Common myeloid progenitor, CD34-positive (primary cell): ENCODE measurements at regions of chr2 and their contacts with region 1.

Region 1: GRCh38 chr2:68925295-68925896 is 27.3 kb downstream of the GKN2 start:
- DNase-seq: peak; percentile 61 to 77 (median 71)
- H3K4me3 ChIP-seq: no peak overlapping the region
- H3K27ac ChIP-seq: no peak overlapping the region
- H3K4me1 ChIP-seq: peaks cover 0 to 4% (median 2%) of the 10 kb centered on the region in 4 experiments
- H3K27me3 ChIP-seq: no peaks in the 10 kb centered on the region

Region 2: GRCh38 chr2:68467077-68467960 is 458.1 kb before region 1 on chr2 and contains the starts of genes APLF and FBXO48:
- CTCF ChIA-PET with region 1: interaction called, 48 read pairs
- POLR2A ChIA-PET with region 1: no interaction called
- DNase-seq: peak; percentile 99 to 100 (median 99)
- H3K4me3 ChIP-seq: peak within 1 kb of the TSS; percentile 79 to 98 (median 96)
- H3K27ac ChIP-seq: peak within 1 kb of the TSS; percentile 91 to 96
- H3K4me1 ChIP-seq: peaks cover 2 to 29% (median 18%) of the 10 kb centered on the region in 4 experiments
- H3K27me3 ChIP-seq: no peaks in the 10 kb centered on the region

Region 3: GRCh38 chr2:68709421-68709911 is 215.9 kb before region 1 on chr2:
- CTCF ChIA-PET with region 1: interaction called, 86 read pairs
- POLR2A ChIA-PET with region 1: no interaction called
- DNase-seq: peak; percentile 53 to 57 (median 57)
- H3K4me3 ChIP-seq: no peak overlapping the region
- H3K27ac ChIP-seq: no peak overlapping the region
- H3K4me1 ChIP-seq: peaks cover 2 to 22% (median 16%) of the 10 kb centered on the region in 4 experiments
- H3K27me3 ChIP-seq: no peaks in the 10 kb centered on the region

Region 4: GRCh38 chr2:68837164-68837860 is 88.1 kb before region 1 on chr2:
- CTCF ChIA-PET with region 1: interaction called, 22 read pairs
- POLR2A ChIA-PET with region 1: no interaction called
- DNase-seq: peak; percentile 86 to 94 (median 94)
- H3K4me3 ChIP-seq: peak overlapping the region in 1 of 7 experiments; percentile 24
- H3K27ac ChIP-seq: no peak overlapping the region
- H3K4me1 ChIP-seq: peaks cover 31 to 56% (median 51%) of the 10 kb centered on the region in 4 experiments
- H3K27me3 ChIP-seq: no peaks in the 10 kb centered on the region

Region 5: GRCh38 chr2:68936427-68936826 is 11.0 kb after region 1 on chr2:
- CTCF ChIA-PET with region 1: interaction called, 18 read pairs
- POLR2A ChIA-PET with region 1: no interaction called
- DNase-seq: no peak
- H3K4me3 ChIP-seq: no peak overlapping the region
- H3K27ac ChIP-seq: no peak overlapping the region
- H3K4me1 ChIP-seq: no peaks in the 10 kb centered on the region
- H3K27me3 ChIP-seq: no peaks in the 10 kb centered on the region